Activated naive CD4-positive, alpha-beta T cell treated with anti-CD3 and anti-CD28 coated beads for 36 hours (primary cell): ENCODE measurements at regions of chr5 and their contacts with region 1.

Region 1: DNA sequence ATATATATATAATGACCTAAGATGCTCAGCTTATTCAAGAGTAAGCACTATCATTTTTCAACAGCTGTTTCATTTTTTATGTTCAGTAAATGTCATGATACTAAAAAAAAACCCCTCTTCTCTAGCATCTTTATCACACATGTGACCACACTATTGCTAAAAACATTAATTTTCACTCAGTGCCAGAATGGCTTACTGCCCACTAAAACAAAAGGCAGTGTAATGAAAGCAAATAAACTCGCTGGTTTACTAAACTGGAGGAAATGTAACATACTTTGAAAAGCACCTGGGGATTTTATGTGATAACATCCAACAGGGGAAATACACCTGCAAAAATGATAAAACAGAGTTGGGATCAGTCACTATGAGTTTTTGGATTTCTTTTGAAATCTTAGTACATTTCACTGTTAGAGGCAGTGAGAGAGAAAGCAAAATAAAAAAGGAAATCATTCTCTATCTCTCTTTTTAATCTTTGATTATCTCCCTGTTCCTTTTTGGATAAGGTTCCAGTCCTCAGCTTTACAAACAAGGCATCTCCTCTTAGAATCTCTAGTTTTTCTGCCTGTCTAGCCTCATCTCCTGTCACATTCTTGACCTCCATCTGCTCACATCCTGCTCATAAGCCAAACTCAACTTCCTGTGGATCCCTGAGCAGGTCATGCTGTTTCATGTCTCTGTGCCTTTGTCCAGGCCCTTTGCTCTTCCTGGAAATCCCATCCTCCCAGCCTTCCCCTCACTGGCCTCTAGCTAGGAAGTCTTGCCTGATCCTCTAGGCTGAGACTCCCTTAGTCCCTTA is 338.0 kb downstream of the MAN2A1 start:
- DNase-seq: no peak
- H3K4me3 Mint-ChIP-seq: no peak overlapping the region
- H3K27ac Mint-ChIP-seq: peak overlapping the region; percentile 61
- H3K4me1 Mint-ChIP-seq: peaks cover 30% of the 10 kb centered on the region
- H3K27me3 Mint-ChIP-seq: no peaks in the 10 kb centered on the region

Region 2: DNA sequence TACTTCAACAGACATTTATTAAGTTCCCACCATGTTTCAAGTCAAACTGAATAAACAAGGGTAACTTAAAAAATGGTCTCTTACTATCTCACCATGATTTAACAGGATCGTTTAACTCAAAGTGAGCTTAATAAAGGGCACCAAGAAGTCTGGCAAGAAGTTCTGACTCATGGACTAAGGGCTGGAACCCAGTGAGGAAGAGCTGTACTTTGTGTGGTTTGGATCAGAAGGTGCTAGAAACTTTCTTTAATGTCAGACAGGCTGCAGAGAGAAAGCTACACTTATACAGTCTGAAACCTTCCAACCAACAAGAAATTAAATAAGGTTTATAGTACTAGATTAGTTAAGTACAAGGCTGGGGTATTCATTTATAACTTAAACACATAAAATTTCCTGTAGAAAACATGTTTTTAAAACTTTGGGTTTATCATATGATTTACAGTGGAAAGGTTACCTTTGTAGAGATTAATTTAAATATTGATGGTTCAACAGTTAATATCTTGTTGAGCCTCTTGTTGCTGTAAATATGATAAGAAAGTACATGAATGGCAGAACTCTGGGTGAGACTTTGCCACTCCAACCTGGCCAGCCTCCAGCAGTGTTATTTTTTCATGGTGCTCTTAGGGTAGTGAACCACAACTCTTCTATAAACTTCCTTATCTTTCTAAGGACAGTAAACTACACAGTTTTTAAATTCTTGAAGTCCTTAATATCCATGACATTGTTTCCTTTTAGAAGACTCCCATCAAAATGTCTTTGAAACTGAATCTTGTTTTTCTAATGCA is 175.2 kb before region 1 on chr5:
- CTCF ChIA-PET with region 1: no interaction called
- intact Hi-C with region 1: loop called (anchors 1 kb)
- DNase-seq: peak; percentile 30
- H3K4me3 Mint-ChIP-seq: no peak overlapping the region
- H3K27ac Mint-ChIP-seq: peak overlapping the region; percentile 54
- H3K4me1 Mint-ChIP-seq: peaks cover 75% of the 10 kb centered on the region
- H3K27me3 Mint-ChIP-seq: no peaks in the 10 kb centered on the region

Region 3: GRCh38 chr5:109921735-109922380 is 105.9 kb before region 1 on chr5:
- CTCF ChIA-PET with region 1: no interaction called
- intact Hi-C with region 1: loop called (anchors 1 kb)
- DNase-seq: peak; percentile 84
- H3K4me3 Mint-ChIP-seq: peak overlapping the region; percentile 55
- H3K27ac Mint-ChIP-seq: peak overlapping the region; percentile 93
- H3K4me1 Mint-ChIP-seq: peaks cover 35% of the 10 kb centered on the region
- H3K27me3 Mint-ChIP-seq: no peaks in the 10 kb centered on the region

Region 4: DNA sequence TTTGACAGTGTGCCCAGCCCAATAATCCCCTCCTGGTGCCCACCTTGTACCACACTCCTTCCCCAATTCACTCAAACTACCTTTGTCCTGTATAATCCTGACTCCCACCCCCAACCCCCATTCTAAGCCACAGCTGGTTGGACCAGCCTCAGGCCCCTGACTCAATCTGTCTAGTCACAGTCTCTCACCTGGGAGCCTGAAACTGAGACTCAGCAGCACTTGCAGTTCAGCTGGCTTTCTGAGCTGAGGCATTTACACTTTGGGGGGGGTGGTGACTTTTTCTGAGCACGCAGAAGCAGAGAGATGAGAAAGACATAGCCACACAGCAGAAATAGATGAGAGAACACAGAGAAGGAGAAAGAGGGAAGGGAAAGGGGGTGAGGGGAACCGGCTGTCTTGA is 90.7 kb before region 1 on chr5:
- CTCF ChIA-PET with region 1: no interaction called
- intact Hi-C with region 1: loop called (anchors 1 kb)
- DNase-seq: peak; percentile 81
- H3K4me3 Mint-ChIP-seq: peak overlapping the region; percentile 17
- H3K27ac Mint-ChIP-seq: peak overlapping the region; percentile 80
- H3K4me1 Mint-ChIP-seq: peaks cover 29% of the 10 kb centered on the region
- H3K27me3 Mint-ChIP-seq: no peaks in the 10 kb centered on the region

Region 5: GRCh38 chr5:109945097-109945678 is 82.5 kb before region 1 on chr5:
- CTCF ChIA-PET with region 1: no interaction called
- intact Hi-C with region 1: loop called (anchors 1 kb)
- DNase-seq: peak; percentile 62
- H3K4me3 Mint-ChIP-seq: no peak overlapping the region
- H3K27ac Mint-ChIP-seq: peak overlapping the region; percentile 19
- H3K4me1 Mint-ChIP-seq: peaks cover 22% of the 10 kb centered on the region
- H3K27me3 Mint-ChIP-seq: no peaks in the 10 kb centered on the region

Region 6: GRCh38 chr5:109961751-109962150 is 66.0 kb before region 1 on chr5:
- CTCF ChIA-PET with region 1: no interaction called
- intact Hi-C with region 1: loop called (anchors 1 kb)
- DNase-seq: no peak
- H3K4me3 Mint-ChIP-seq: no peak overlapping the region
- H3K27ac Mint-ChIP-seq: no peak overlapping the region
- H3K4me1 Mint-ChIP-seq: peaks cover 27% of the 10 kb centered on the region
- H3K27me3 Mint-ChIP-seq: no peaks in the 10 kb centered on the region

Region 7: GRCh38 chr5:110001648-110002047 is 26.1 kb before region 1 on chr5:
- CTCF ChIA-PET with region 1: no interaction called
- intact Hi-C with region 1: loop called (anchors 1 kb)
- DNase-seq: no peak
- H3K4me3 Mint-ChIP-seq: no peak overlapping the region
- H3K27ac Mint-ChIP-seq: no peak overlapping the region
- H3K4me1 Mint-ChIP-seq: peaks cover 18% of the 10 kb centered on the region
- H3K27me3 Mint-ChIP-seq: no peaks in the 10 kb centered on the region